Tibial artery (tissue), 4 donors: ENCODE measurements at regions of chr17 and their contacts with region 1.

Region 1: GRCh38 chr17:66255112-66255511 is 25.9 kb upstream of the APOH start:
- DNase-seq: no peak
- H3K4me3 ChIP-seq: no peak overlapping the region
- H3K27ac ChIP-seq: no peak overlapping the region
- H3K4me1 ChIP-seq: no peaks in the 10 kb centered on the region
- H3K27me3 ChIP-seq: no peaks in the 10 kb centered on the region
- CTCF ChIP-seq: peak; percentile 73 to 82

Region 2: DNA sequence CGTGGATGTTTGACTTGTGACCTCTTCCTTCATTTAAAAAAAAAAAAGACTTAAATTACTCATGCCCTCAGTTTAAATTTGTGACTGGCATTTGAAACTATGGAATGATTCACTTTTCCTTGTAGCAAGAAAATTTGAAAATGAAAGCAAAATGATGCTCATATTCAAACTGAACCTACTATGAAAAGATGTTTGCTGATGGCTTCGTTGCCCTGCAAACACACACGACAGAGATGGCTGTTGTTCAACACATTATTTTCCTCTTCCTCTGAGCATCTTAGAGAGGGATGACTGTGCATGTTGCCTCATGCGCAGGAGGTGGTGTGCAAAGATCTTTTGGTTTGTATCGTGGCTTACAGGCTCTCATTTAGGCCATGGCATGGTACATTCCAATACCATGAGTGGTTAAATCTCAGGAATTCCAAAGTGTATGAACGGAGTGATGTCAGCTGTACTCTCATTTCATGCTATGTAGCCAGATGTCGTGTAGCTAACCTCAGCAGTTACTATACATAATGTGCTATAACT is 211.8 kb after region 1 on chr17:
- intact Hi-C with region 1: no loop called
- DNase-seq: no peak
- H3K4me3 ChIP-seq: peak overlapping the region; percentile 21
- H3K27ac ChIP-seq: peak overlapping the region in 1 of 2 donors; percentile 20
- H3K4me1 ChIP-seq: peaks cover 0 to 32% (median 11%) of the 10 kb centered on the region in 4 donors
- H3K27me3 ChIP-seq: no peaks in the 10 kb centered on the region
- CTCF ChIP-seq: no peak

Region 3: DNA sequence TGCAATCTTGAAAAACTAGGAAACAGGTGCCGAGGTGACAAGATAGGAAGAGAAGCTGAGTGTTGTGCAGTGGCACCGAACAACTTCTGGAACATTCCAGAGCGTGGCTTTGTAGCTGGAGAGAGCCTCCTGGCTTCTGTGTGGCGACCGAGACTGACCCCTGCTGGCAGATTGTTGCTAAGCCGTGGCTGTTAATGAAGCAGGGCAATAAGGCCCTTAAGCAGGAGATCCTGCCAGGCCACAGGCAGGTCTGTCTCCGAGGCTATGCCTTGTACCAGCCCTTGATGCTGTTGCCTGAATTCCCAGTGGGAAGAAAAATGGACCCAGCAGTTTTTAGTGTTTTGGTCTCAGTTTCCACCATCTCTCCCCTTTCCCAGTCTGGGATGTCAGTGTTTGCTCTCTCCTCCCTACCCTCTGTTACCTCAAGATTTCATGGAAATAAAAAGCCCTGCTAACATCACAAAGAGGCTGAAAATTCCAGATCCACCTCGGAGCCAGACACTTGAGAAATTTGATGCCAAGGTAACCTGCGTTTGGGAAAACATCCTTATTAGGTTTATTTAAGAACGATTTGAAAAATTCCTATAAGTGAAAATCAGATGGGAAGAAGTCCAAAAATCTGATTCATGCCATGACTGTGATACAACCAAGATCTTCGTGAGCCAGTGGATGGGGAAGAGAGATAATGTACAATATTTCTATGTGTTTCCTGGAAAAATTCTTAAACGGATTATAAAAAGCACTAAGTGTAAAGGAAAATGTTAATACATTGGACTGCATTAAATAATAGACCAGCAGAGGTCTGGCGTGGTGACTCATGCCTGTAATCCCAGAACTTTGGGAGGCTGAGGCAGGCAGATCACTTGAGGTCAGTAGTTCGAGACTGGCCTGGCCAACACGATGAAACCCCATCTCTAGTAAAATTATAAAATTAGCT is 312.4 kb after region 1 on chr17:
- intact Hi-C with region 1: loop called (anchors 5 kb)
- DNase-seq: peak; percentile 81 to 82
- H3K4me3 ChIP-seq: no peak overlapping the region
- H3K27ac ChIP-seq: no peak overlapping the region
- H3K4me1 ChIP-seq: no peaks in the 10 kb centered on the region
- H3K27me3 ChIP-seq: no peaks in the 10 kb centered on the region
- CTCF ChIP-seq: peak; percentile 69 to 72

Region 4: DNA sequence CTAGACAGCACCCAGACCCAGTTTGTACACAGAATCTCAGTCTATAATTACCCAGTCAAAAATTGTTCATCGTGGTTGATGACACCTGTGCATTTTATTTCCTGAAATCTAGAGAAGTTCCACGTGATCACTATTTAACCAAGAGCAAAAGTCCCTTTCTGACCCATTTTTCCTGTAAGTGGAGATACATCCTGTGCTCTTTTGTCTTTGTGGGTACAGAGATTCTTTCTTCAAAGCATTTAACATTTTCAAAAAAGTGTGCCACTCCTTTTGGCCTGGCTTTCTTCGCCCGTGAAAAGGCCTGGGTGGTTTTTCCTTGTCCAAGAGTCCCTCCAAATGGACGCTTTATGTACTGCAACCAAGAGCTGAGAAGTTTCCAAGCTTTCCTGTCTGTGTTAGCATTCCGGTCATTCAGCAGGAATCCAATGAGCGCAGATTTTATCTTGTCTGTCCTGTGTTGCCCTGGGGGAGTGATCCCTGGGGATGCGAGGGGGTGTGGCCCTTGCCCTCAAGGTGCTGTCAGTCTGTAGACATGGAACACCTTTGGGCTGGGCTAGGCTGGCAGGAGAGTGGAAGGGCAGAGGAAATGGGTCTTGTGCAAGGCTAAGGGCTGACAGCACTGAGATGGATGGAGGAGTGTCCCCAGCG is 418.7 kb after region 1 on chr17:
- intact Hi-C with region 1: loop called (anchors 1 kb)
- DNase-seq: no peak
- H3K4me3 ChIP-seq: no peak overlapping the region
- H3K27ac ChIP-seq: no peak overlapping the region
- H3K4me1 ChIP-seq: peaks cover 0 to 11% (median 3%) of the 10 kb centered on the region in 4 donors
- H3K27me3 ChIP-seq: no peaks in the 10 kb centered on the region
- CTCF ChIP-seq: peak; percentile 63 to 71